CD4-positive, alpha-beta memory T cell (primary cell): ENCODE measurements at regions of chr19 and their contacts with region 1.

Region 1: GRCh38 chr19:49555600-49556411 is 24.6 kb downstream of the NOSIP start:
- DNase-seq: peak; percentile 82 to 87 (median 86)
- H3K4me3 ChIP-seq: peak overlapping the region in 1 of 2 donors; percentile 19
- H3K4me3 Mint-ChIP-seq: peak overlapping the region; percentile 35 to 86 (median 78)
- H3K27ac ChIP-seq: no peak overlapping the region
- H3K27ac Mint-ChIP-seq: peak overlapping the region; percentile 89 to 99 (median 97)
- H3K4me1 ChIP-seq: peaks cover 97% of the 10 kb centered on the region
- H3K4me1 Mint-ChIP-seq: peaks cover 44 to 85% (median 63%) of the 10 kb centered on the region in 4 donors
- H3K27me3 ChIP-seq: no peaks in the 10 kb centered on the region
- H3K27me3 Mint-ChIP-seq: no peaks in the 10 kb centered on the region

Region 2: GRCh38 chr19:49487277-49488045 is 68.3 kb before region 1 on chr19 and contains the start of gene RPL13A:
- CTCF ChIA-PET with region 1: no interaction called
- POLR2A ChIA-PET with region 1: interaction called, 10 read pairs
- intact Hi-C with region 1: no loop called
- DNase-seq: peak; percentile 98 to 100 (median 100)
- H3K4me3 ChIP-seq: peak within 1 kb of the TSS; percentile 98 to 99
- H3K4me3 Mint-ChIP-seq: peak within 1 kb of the TSS; percentile 94 to 100 (median 98)
- H3K27ac ChIP-seq: peak within 1 kb of the TSS; percentile 85
- H3K27ac Mint-ChIP-seq: peak within 1 kb of the TSS; percentile 95 to 98 (median 98)
- H3K4me1 ChIP-seq: peaks cover 39% of the 10 kb centered on the region
- H3K4me1 Mint-ChIP-seq: peaks cover 18 to 55% (median 36%) of the 10 kb centered on the region in 4 donors
- H3K27me3 ChIP-seq: no peaks in the 10 kb centered on the region
- H3K27me3 Mint-ChIP-seq: no peaks in the 10 kb centered on the region
- total RNA-seq, gene RPL13A: 5,517 to 5,661 TPM

Region 3: GRCh38 chr19:49502866-49503581 is 52.8 kb before region 1 on chr19:
- CTCF ChIA-PET with region 1: interaction called, 38 read pairs
- POLR2A ChIA-PET with region 1: interaction called, 8 read pairs
- intact Hi-C with region 1: no loop called
- DNase-seq: peak; percentile 65 to 79 (median 74)
- H3K4me3 ChIP-seq: no peak overlapping the region
- H3K4me3 Mint-ChIP-seq: peak overlapping the region; percentile 6 to 100 (median 36)
- H3K27ac ChIP-seq: peak overlapping the region; percentile 95
- H3K27ac Mint-ChIP-seq: peak overlapping the region; percentile 91 to 100 (median 99)
- H3K4me1 ChIP-seq: peaks cover 52% of the 10 kb centered on the region
- H3K4me1 Mint-ChIP-seq: peaks cover 16 to 61% (median 33%) of the 10 kb centered on the region in 4 donors
- H3K27me3 ChIP-seq: no peaks in the 10 kb centered on the region
- H3K27me3 Mint-ChIP-seq: no peaks in the 10 kb centered on the region

Region 4: GRCh38 chr19:49580264-49581006 is 24.6 kb after region 1 on chr19 and contains the start of gene NOSIP:
- CTCF ChIA-PET with region 1: interaction called, 3 read pairs
- POLR2A ChIA-PET with region 1: interaction called, 15 read pairs
- intact Hi-C with region 1: no loop called
- DNase-seq: peak; percentile 94 to 97 (median 95)
- H3K4me3 ChIP-seq: peak within 1 kb of the TSS; percentile 54 to 99
- H3K4me3 Mint-ChIP-seq: peak within 1 kb of the TSS; percentile 90 to 97 (median 94)
- H3K27ac ChIP-seq: peak within 1 kb of the TSS; percentile 80
- H3K27ac Mint-ChIP-seq: peak within 1 kb of the TSS; percentile 85 to 96 (median 94)
- H3K4me1 ChIP-seq: peaks cover 31% of the 10 kb centered on the region
- H3K4me1 Mint-ChIP-seq: peaks cover 21 to 40% (median 28%) of the 10 kb centered on the region in 4 donors
- H3K27me3 ChIP-seq: no peaks in the 10 kb centered on the region
- H3K27me3 Mint-ChIP-seq: no peaks in the 10 kb centered on the region
- total RNA-seq, gene NOSIP: 177 to 191 TPM

Region 5: GRCh38 chr19:49665351-49666119 is 109.7 kb after region 1 on chr19 and contains the starts of genes BCL2L12 and IRF3:
- CTCF ChIA-PET with region 1: no interaction called
- POLR2A ChIA-PET with region 1: interaction called, 10 read pairs
- intact Hi-C with region 1: no loop called
- DNase-seq: peak; percentile 99
- H3K4me3 ChIP-seq: peak within 1 kb of the TSS; percentile 99
- H3K4me3 Mint-ChIP-seq: peak within 1 kb of the TSS; percentile 95 to 100 (median 97)
- H3K27ac ChIP-seq: peak within 1 kb of the TSS; percentile 93
- H3K27ac Mint-ChIP-seq: peak within 1 kb of the TSS; percentile 95 to 100 (median 99)
- H3K4me1 ChIP-seq: peaks cover 31% of the 10 kb centered on the region
- H3K4me1 Mint-ChIP-seq: peaks cover 19 to 56% (median 31%) of the 10 kb centered on the region in 4 donors
- H3K27me3 ChIP-seq: no peaks in the 10 kb centered on the region
- H3K27me3 Mint-ChIP-seq: no peaks in the 10 kb centered on the region
- total RNA-seq, gene BCL2L12: 21.9 to 22.1 TPM
- total RNA-seq, gene IRF3: 366 to 386 TPM